ENCODE measurements at regions of chr2 and their contacts with region 1.

Region 1: GRCh38 chr2:196171248-196171871 is at the start of gene STK17B:
- DNase-seq: peak; percentile 93 to 97 (median 95)
- H3K4me3 ChIP-seq: peak within 1 kb of the TSS; percentile 87 to 88
- H3K4me3 Mint-ChIP-seq: peak within 1 kb of the TSS; percentile 91 to 99 (median 96)
- H3K27ac ChIP-seq: peak within 1 kb of the TSS; percentile 92
- H3K27ac Mint-ChIP-seq: peak within 1 kb of the TSS; percentile 94 to 98 (median 96)
- H3K4me1 ChIP-seq: peaks cover 45% of the 10 kb centered on the region
- H3K4me1 Mint-ChIP-seq: peaks cover 31 to 52% (median 39%) of the 10 kb centered on the region in 4 donors
- H3K27me3 ChIP-seq: no peaks in the 10 kb centered on the region
- H3K27me3 Mint-ChIP-seq: no peaks in the 10 kb centered on the region
- total RNA-seq, gene STK17B: 234 to 243 TPM

Region 2: DNA sequence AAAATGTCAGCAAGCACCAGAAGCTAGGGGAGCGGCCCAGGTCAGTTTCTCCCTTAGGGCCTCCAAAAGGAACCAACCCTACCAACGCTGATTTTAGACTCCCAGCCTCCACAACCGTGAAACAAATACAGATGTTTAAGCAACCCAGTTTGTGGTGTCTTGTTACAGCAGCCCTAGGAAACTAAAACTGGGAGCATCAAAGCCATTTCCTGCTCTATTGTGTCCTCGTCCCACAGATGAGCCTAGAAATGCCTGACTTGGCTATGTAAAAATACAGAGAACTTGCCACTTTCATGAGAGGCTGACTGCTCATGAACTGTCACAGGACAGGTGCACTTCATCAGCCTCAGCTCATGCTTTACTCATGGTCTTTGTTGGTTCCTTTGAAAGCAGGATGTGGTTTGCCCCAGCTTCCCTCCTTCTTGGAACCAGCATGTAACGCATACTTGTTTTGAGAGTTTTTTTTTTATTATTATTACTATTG is 611.9 kb before region 1 on chr2:
- CTCF ChIA-PET with region 1: interaction called, 3 read pairs
- POLR2A ChIA-PET with region 1: no interaction called
- intact Hi-C with region 1: loop called (anchors 10 kb)
- DNase-seq: peak; percentile 87 to 90 (median 89)
- H3K4me3 ChIP-seq: no peak overlapping the region
- H3K4me3 Mint-ChIP-seq: peak overlapping the region; percentile 49 to 85 (median 70)
- H3K27ac ChIP-seq: peak overlapping the region; percentile 31
- H3K27ac Mint-ChIP-seq: peak overlapping the region; percentile 82 to 97 (median 92)
- H3K4me1 ChIP-seq: peaks cover 86% of the 10 kb centered on the region
- H3K4me1 Mint-ChIP-seq: peaks cover 49 to 74% (median 58%) of the 10 kb centered on the region in 4 donors
- H3K27me3 ChIP-seq: no peaks in the 10 kb centered on the region
- H3K27me3 Mint-ChIP-seq: no peaks in the 10 kb centered on the region

Region 3: GRCh38 chr2:195945061-195945460 is 226.3 kb before region 1 on chr2:
- CTCF ChIA-PET with region 1: no interaction called
- POLR2A ChIA-PET with region 1: no interaction called
- intact Hi-C with region 1: no loop called
- DNase-seq: no peak
- H3K4me3 ChIP-seq: no peak overlapping the region
- H3K4me3 Mint-ChIP-seq: no peak overlapping the region
- H3K27ac ChIP-seq: no peak overlapping the region
- H3K27ac Mint-ChIP-seq: no peak overlapping the region
- H3K4me1 ChIP-seq: no peaks in the 10 kb centered on the region
- H3K4me1 Mint-ChIP-seq: no peaks in the 10 kb centered on the region
- H3K27me3 ChIP-seq: no peaks in the 10 kb centered on the region
- H3K27me3 Mint-ChIP-seq: peaks cover 3 to 10% of the 10 kb centered on the region in 2 donors

Region 4: GRCh38 chr2:196086517-196087368 is 84.6 kb before region 1 on chr2:
- CTCF ChIA-PET with region 1: no interaction called
- POLR2A ChIA-PET with region 1: interaction called, 44 read pairs
- intact Hi-C with region 1: no loop called
- DNase-seq: no peak
- H3K4me3 ChIP-seq: no peak overlapping the region
- H3K4me3 Mint-ChIP-seq: peak overlapping the region in 4 of 8 donors; percentile 14 to 68 (median 20)
- H3K27ac ChIP-seq: no peak overlapping the region
- H3K27ac Mint-ChIP-seq: peak overlapping the region in 1 of 7 donors; percentile 41
- H3K4me1 ChIP-seq: peaks cover 11% of the 10 kb centered on the region
- H3K4me1 Mint-ChIP-seq: peaks cover 15 to 39% (median 24%) of the 10 kb centered on the region in 4 donors
- H3K27me3 ChIP-seq: no peaks in the 10 kb centered on the region
- H3K27me3 Mint-ChIP-seq: no peaks in the 10 kb centered on the region

Region 5: GRCh38 chr2:196149948-196150347 is 21.4 kb before region 1 on chr2:
- CTCF ChIA-PET with region 1: interaction called, 5 read pairs
- POLR2A ChIA-PET with region 1: interaction called, 74 read pairs
- intact Hi-C with region 1: loop called (anchors 1 kb)
- DNase-seq: no peak
- H3K4me3 ChIP-seq: no peak overlapping the region
- H3K4me3 Mint-ChIP-seq: peak overlapping the region in 7 of 8 donors; percentile 13 to 75 (median 38)
- H3K27ac ChIP-seq: peak overlapping the region; percentile 43
- H3K27ac Mint-ChIP-seq: peak overlapping the region; percentile 42 to 92 (median 85)
- H3K4me1 ChIP-seq: peaks cover 94% of the 10 kb centered on the region
- H3K4me1 Mint-ChIP-seq: peaks cover 59 to 99% (median 77%) of the 10 kb centered on the region in 4 donors
- H3K27me3 ChIP-seq: no peaks in the 10 kb centered on the region
- H3K27me3 Mint-ChIP-seq: no peaks in the 10 kb centered on the region

Region 6: GRCh38 chr2:196195302-196195701 is 23.9 kb after region 1 on chr2:
- CTCF ChIA-PET with region 1: interaction called, 26 read pairs
- POLR2A ChIA-PET with region 1: interaction called, 94 read pairs
- intact Hi-C with region 1: loop called (anchors 1 kb)
- DNase-seq: no peak
- H3K4me3 ChIP-seq: peak overlapping the region in 1 of 2 donors; percentile 34
- H3K4me3 Mint-ChIP-seq: peak overlapping the region; percentile 29 to 83 (median 74)
- H3K27ac ChIP-seq: no peak overlapping the region
- H3K27ac Mint-ChIP-seq: peak overlapping the region; percentile 23 to 91 (median 61)
- H3K4me1 ChIP-seq: peaks cover 61% of the 10 kb centered on the region
- H3K4me1 Mint-ChIP-seq: peaks cover 32 to 76% (median 53%) of the 10 kb centered on the region in 4 donors
- H3K27me3 ChIP-seq: no peaks in the 10 kb centered on the region
- H3K27me3 Mint-ChIP-seq: no peaks in the 10 kb centered on the region

Region 7: GRCh38 chr2:196225213-196225612 is 53.9 kb after region 1 on chr2:
- CTCF ChIA-PET with region 1: interaction called, 37 read pairs
- POLR2A ChIA-PET with region 1: interaction called, 113 read pairs
- intact Hi-C with region 1: loop called (anchors 1 kb)
- DNase-seq: no peak
- H3K4me3 ChIP-seq: no peak overlapping the region
- H3K4me3 Mint-ChIP-seq: peak overlapping the region in 3 of 8 donors; percentile 33 to 57 (median 41)
- H3K27ac ChIP-seq: no peak overlapping the region
- H3K27ac Mint-ChIP-seq: peak overlapping the region in 5 of 7 donors; percentile 1 to 68 (median 54)
- H3K4me1 ChIP-seq: peaks cover 79% of the 10 kb centered on the region
- H3K4me1 Mint-ChIP-seq: peaks cover 51 to 85% (median 69%) of the 10 kb centered on the region in 4 donors
- H3K27me3 ChIP-seq: no peaks in the 10 kb centered on the region
- H3K27me3 Mint-ChIP-seq: no peaks in the 10 kb centered on the region

Region 8: GRCh38 chr2:196268538-196269338 is 97.4 kb after region 1 on chr2:
- CTCF ChIA-PET with region 1: interaction called, 3 read pairs
- POLR2A ChIA-PET with region 1: interaction called, 83 read pairs
- intact Hi-C with region 1: no loop called
- DNase-seq: peak in 3 of 5 donors; percentile 26 to 55 (median 31)
- H3K4me3 ChIP-seq: no peak overlapping the region
- H3K4me3 Mint-ChIP-seq: peak overlapping the region; percentile 36 to 89 (median 81)
- H3K27ac ChIP-seq: peak overlapping the region; percentile 45
- H3K27ac Mint-ChIP-seq: peak overlapping the region; percentile 73 to 94 (median 84)
- H3K4me1 ChIP-seq: peaks cover 69% of the 10 kb centered on the region
- H3K4me1 Mint-ChIP-seq: peaks cover 40 to 71% (median 53%) of the 10 kb centered on the region in 4 donors
- H3K27me3 ChIP-seq: no peaks in the 10 kb centered on the region
- H3K27me3 Mint-ChIP-seq: no peaks in the 10 kb centered on the region

Region 9: DNA sequence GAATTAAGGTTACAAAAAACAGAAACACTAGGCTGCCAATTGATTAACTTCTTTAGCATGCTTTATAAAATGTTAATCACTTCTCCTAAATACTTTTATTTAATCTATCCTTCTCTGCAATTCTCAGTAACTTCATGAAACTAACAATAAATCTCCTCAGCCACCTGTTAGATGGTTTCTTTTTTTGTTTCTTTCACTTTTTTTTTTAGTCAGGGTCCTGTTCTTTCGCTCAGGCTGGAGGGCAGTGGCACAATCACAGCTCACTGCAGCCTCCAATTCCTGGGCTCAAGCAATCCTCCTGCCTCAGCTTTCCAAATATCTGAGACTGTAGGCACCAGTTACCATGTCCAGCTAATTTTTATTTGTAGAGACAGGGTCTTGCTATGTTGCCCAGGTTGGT is 213.4 kb after region 1 on chr2:
- CTCF ChIA-PET with region 1: no interaction called
- POLR2A ChIA-PET with region 1: no interaction called
- intact Hi-C with region 1: no loop called
- DNase-seq: no peak
- H3K4me3 ChIP-seq: no peak overlapping the region
- H3K4me3 Mint-ChIP-seq: no peak overlapping the region
- H3K27ac ChIP-seq: no peak overlapping the region
- H3K27ac Mint-ChIP-seq: no peak overlapping the region
- H3K4me1 ChIP-seq: no peaks in the 10 kb centered on the region
- H3K4me1 Mint-ChIP-seq: no peaks in the 10 kb centered on the region
- H3K27me3 ChIP-seq: no peaks in the 10 kb centered on the region
- H3K27me3 Mint-ChIP-seq: peaks cover 2 to 3% of the 10 kb centered on the region in 2 donors